Posterior cingulate gyrus (tissue), 11 donors: ENCODE measurements at regions of chr10 and their contacts with region 1.

Region 1: DNA sequence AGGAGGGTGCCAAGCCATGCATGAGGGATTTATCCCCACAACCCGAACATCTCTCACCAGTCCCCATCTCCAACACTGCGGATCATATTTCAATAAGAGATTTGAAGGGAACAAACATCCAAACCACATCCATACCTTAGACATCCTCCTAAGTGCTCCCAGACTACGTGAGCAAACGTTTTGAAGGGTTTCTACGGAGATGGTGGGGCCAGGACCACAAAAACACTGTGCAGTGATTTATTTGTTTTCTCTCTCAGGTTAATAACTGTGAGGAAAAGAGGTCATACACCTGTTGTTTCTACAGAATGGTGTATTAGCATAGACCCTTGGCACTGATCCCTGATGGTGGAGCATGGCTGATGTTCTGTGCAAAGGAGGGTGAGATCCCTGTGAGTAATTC is 277.8 kb downstream of the FRMD4A start:
- DNase-seq: no peak

Region 2: DNA sequence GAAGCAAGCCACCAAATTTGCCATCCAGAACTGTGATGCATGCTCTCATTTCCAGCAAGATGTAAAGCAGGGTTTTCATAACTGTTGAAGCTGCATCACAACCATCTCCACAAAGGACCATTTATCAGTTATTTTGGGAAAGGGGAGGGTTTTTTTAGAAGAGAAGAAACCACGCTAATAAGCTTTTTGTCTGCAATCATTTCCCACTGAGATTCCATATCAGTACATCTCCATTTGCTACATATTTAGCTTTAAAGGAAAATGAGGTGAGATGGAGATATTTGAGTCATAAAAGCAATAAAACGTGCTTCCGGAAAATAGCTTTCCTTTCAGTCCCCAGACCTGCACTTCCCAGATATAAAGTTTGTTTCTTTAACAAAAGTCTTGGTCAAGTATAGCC is 19.6 kb after region 1 on chr10:
- intact Hi-C with region 1: loop called (anchors 2 kb)
- DNase-seq: no peak